Endothelial cell of umbilical vein (primary cell): ENCODE measurements at regions of chr20 and their contacts with region 1.

Region 1: DNA sequence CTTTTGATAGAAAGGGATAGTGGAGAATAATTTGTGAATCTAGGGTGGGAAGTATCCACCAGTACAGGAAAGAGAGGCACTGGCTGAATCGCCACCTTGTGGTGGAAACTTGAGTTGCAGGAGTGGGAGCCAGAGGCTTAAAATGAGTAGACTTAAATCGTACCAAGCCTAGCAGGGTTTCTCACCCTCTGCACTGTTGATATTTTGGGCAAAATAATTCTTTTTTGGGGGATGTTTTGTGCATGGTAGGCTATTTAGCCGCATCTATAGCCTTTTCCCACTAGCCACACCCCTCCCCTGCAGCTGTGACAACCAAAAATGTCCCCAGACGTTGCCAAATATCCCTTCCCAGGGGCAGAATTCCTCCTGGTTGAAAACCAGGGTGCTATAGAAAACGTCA is 119.1 kb downstream of the DHX35 start:
- DNase-seq: peak; percentile 79
- H3K4me3 ChIP-seq: no peak overlapping the region
- H3K27ac ChIP-seq: no peak overlapping the region
- H3K4me1 ChIP-seq: no peaks in the 10 kb centered on the region
- H3K27me3 ChIP-seq: peaks cover 4 to 9% of the 10 kb centered on the region in 2 experiments
- CTCF ChIP-seq: peak; percentile 77 to 88
- POLR2A ChIP-seq: no peak

Region 2: GRCh38 chr20:39057911-39058310 is 23.3 kb before region 1 on chr20:
- CTCF ChIA-PET with region 1: interaction called, 11 read pairs
- POLR2A ChIA-PET with region 1: no interaction called
- dilution Hi-C with region 1: no loop called
- intact Hi-C with region 1: no loop called
- DNase-seq: no peak
- H3K4me3 ChIP-seq: no peak overlapping the region
- H3K27ac ChIP-seq: no peak overlapping the region
- H3K4me1 ChIP-seq: no peaks in the 10 kb centered on the region
- H3K27me3 ChIP-seq: no peaks in the 10 kb centered on the region
- CTCF ChIP-seq: no peak
- POLR2A ChIP-seq: no peak

Region 3: GRCh38 chr20:39070484-39071231 is 10.6 kb before region 1 on chr20:
- CTCF ChIA-PET with region 1: interaction called, 50 read pairs
- POLR2A ChIA-PET with region 1: no interaction called
- dilution Hi-C with region 1: no loop called
- intact Hi-C with region 1: no loop called
- DNase-seq: peak; percentile 25
- H3K4me3 ChIP-seq: no peak overlapping the region
- H3K27ac ChIP-seq: no peak overlapping the region
- H3K4me1 ChIP-seq: no peaks in the 10 kb centered on the region
- H3K27me3 ChIP-seq: peaks cover 3 to 8% of the 10 kb centered on the region in 2 experiments
- CTCF ChIP-seq: no peak
- POLR2A ChIP-seq: no peak

Region 4: DNA sequence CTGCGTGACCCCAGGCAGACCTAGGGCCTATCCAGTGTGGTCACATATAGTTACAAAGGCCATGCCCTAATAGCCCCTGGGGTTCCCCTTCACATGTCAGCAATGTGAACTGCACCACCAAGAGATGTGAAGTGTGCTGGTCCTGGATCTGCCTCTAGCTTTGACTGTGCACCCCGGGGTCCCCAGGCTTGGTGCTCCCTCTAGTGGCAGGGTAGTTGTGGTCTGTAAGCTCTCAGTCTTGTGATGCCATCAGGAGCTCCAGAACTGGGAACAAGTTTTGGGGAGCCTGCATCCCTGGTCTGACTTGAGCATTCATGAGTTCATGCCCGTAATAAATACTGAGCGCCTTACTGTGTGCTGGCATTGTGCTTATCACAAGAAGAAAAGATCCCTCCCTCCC is 24.3 kb after region 1 on chr20:
- CTCF ChIA-PET with region 1: interaction called, 14 read pairs
- POLR2A ChIA-PET with region 1: no interaction called
- dilution Hi-C with region 1: no loop called
- intact Hi-C with region 1: no loop called
- DNase-seq: no peak
- H3K4me3 ChIP-seq: no peak overlapping the region
- H3K27ac ChIP-seq: no peak overlapping the region
- H3K4me1 ChIP-seq: peaks cover 20% of the 10 kb centered on the region
- H3K27me3 ChIP-seq: peaks cover 0 to 10% of the 10 kb centered on the region in 2 experiments
- CTCF ChIP-seq: no peak
- POLR2A ChIP-seq: no peak